Naive thymus-derived CD8-positive, alpha-beta T cell (primary cell): ENCODE measurements at regions of chr20 and their contacts with region 1.

Region 1: GRCh38 chr20:57432874-57433491 is 41.8 kb downstream of the RBM38 start:
- DNase-seq: peak; percentile 40 to 86 (median 64)
- ATAC-seq: peak; percentile 87 to 88
- H3K4me3 Mint-ChIP-seq: peak overlapping the region; percentile 57 to 88 (median 80)
- H3K27ac Mint-ChIP-seq: peak overlapping the region; percentile 66 to 94 (median 90)
- H3K4me1 Mint-ChIP-seq: peaks cover 39 to 77% (median 63%) of the 10 kb centered on the region in 4 donors
- H3K27me3 Mint-ChIP-seq: no peaks in the 10 kb centered on the region

Region 2: GRCh38 chr20:57450419-57450818 is 17.4 kb after region 1 on chr20:
- POLR2A ChIA-PET with region 1: interaction called, 11 read pairs
- DNase-seq: peak in 4 of 10 donors; percentile 20 to 40 (median 37)
- ATAC-seq: peak; percentile 65 to 74
- H3K4me3 Mint-ChIP-seq: peak overlapping the region; percentile 59 to 81 (median 67)
- H3K27ac Mint-ChIP-seq: peak overlapping the region; percentile 52 to 93 (median 80)
- H3K4me1 Mint-ChIP-seq: peaks cover 42 to 51% (median 49%) of the 10 kb centered on the region in 4 donors
- H3K27me3 Mint-ChIP-seq: peaks cover 0 to 3% (median 0%) of the 10 kb centered on the region in 5 donors

Region 3: DNA sequence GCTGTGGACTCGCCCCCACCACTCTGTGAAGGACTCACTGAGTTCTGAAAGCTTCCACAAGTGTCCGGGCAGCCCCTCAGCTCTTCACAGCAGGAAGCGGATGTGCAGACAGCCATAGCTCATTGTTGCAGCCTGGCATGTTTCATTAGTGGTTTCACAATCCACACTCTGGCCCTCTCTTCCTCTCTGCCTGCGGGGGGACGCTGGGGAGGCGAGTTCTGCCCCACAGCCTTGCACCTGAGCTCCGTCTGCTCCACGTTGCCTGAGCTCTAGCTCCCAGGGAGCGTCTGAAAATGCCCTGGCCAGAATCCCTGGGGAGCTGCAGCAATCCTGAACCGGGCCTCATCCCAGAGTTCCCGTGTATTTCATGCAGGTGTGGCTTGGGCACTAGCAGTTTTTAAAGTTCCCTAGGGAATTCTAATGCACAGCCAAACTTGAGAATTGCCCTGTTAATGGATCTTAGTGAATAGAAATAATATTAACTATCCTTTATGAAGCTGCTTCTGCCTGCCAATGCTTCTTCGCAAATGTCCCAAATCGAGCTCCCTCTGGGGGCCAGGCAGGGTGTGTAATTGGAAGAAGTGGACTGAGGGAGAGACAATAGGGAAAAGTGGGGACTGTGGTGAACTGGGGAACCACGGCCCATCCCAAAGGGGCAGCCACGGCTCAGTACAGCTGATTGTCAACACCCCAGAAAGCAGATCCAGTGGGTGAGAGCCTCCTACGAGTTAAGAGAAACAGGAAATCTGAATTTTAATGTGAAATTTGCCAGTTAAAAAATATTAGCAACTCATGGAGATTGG is 40.5 kb after region 1 on chr20:
- POLR2A ChIA-PET with region 1: interaction called, 19 read pairs
- DNase-seq: peak in 4 of 10 donors; percentile 12 to 64 (median 27)
- ATAC-seq: peak; percentile 81 to 83
- H3K4me3 Mint-ChIP-seq: peak overlapping the region; percentile 10 to 70 (median 47)
- H3K27ac Mint-ChIP-seq: peak overlapping the region; percentile 19 to 85 (median 74)
- H3K4me1 Mint-ChIP-seq: peaks cover 11 to 68% (median 35%) of the 10 kb centered on the region in 4 donors
- H3K27me3 Mint-ChIP-seq: no peaks in the 10 kb centered on the region

Region 4: DNA sequence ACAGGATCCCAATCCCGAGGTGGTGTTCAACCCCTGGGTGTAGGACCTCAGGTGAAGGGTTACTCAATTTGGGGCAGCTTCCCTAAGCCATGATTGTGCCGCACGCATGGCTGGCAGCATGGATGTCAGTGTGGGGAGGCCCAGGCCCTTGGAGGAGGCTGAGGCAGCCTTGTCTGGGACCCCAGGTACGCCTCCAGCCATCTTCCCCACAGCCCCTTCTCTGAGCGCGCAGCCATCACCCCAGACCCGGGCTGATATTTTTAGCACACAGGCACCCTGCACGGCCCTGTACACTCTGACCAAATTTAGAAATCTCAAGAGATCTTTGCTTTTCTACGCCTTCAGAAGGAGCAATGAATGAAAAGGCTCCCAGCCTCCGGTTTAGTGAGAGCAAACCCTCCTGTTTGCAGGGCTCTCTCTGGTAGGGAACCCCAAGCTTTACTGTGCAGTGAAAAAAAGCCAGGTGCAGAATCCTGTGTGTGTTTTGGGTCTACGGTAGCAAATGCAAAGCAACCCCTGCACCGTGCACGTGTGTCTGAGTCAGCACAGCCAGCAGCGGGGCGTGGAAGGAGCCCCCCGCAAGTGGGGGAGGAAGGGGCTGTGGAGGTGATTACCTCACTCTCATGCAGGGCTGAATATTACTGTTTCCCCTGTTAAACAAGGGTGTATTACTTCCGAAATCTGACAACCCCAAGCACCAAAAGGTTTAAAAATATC is 47.6 kb after region 1 on chr20:
- POLR2A ChIA-PET with region 1: interaction called, 19 read pairs
- DNase-seq: peak; percentile 18 to 81 (median 50)
- ATAC-seq: peak; percentile 88 to 91
- H3K4me3 Mint-ChIP-seq: peak overlapping the region; percentile 53 to 85 (median 75)
- H3K27ac Mint-ChIP-seq: peak overlapping the region; percentile 66 to 92 (median 84)
- H3K4me1 Mint-ChIP-seq: peaks cover 13 to 65% (median 38%) of the 10 kb centered on the region in 4 donors
- H3K27me3 Mint-ChIP-seq: peaks cover 0 to 2% (median 0%) of the 10 kb centered on the region in 5 donors

Region 5: GRCh38 chr20:57540890-57541580 is 108.1 kb after region 1 on chr20:
- POLR2A ChIA-PET with region 1: no interaction called
- DNase-seq: no peak
- ATAC-seq: no peak
- H3K4me3 Mint-ChIP-seq: no peak overlapping the region
- H3K27ac Mint-ChIP-seq: no peak overlapping the region
- H3K4me1 Mint-ChIP-seq: no peaks in the 10 kb centered on the region
- H3K27me3 Mint-ChIP-seq: peaks cover 7 to 49% (median 29%) of the 10 kb centered on the region in 5 donors